ENCODE measurements at regions of chr15 and their contacts with region 1.

Region 1: DNA sequence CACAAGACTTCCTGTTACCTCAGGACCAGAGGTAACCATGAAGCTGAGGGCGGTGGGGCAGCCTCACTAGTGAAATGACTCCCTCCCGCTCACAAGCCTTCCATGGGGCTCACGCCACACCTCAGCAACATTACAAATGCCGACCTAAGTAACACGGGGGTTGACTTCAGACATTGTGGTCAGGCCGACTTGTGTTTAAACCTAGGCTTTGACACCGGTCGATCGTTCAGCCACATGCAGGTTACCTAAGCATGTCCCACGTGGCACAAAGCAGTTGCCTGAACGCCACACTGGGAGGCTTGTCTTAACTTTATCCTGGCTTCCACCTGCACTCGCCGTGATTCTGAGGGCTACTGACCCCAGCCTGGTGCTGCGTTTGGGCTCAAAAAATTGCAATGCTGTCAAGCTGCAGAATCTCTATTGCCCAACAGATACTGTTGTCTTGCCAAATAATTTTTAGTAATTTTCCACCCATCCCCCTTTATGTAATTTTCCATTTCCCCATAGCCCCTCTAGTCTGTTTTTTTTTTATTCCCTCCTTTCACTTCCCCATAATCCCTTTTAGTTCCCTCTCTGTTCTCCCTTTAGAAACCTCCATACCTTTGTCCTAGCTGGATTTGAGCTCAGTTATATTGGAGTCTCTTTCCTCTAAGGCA is 158.6 kb upstream of the RGMA start:
- DNase-seq: no peak

Region 2: DNA sequence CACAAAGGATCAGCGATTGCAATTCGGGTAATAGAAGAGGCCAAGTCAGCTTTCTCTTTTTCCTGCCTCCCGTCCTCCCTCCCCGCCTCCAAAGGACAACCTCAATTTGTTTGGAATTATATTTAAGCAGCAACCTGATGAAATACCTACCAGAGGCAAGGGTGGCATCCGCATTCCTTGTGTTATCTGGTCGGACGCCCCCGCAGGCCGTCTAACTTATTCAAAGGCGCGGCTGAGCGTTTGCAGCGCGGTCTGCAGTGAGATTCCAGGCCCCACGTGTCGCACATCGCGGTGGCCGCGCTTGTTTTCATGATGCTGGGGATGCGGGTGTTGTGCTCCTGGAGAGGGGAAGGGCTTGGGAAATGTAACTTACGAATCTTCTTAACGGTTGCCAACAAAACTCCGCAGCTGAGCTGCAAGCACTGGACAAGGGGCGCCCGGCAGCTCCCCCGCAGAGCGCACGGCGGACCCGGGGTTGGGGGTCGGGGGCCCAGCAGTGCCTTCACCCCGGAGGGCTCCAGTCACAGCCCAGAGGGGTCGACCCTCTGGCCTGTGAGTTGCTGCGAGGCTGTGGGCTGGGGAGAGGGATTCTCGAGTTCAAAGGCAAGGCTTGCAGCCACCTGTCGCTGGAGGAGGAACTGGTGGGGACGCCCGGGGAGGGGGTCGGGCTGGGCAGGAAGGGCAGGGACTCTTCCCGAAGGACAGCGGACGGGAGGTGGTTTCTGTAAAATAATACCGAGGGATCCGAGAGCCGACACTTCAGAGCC is 138.1 kb before region 1 on chr15:
- intact Hi-C with region 1: loop called (anchors 10 kb)
- DNase-seq: no peak

Region 3: GRCh38 chr15:93189561-93189960 is 58.0 kb before region 1 on chr15:
- intact Hi-C with region 1: no loop called
- DNase-seq: no peak

Region 4: GRCh38 chr15:93321881-93322289 is 74.3 kb after region 1 on chr15:
- intact Hi-C with region 1: no loop called
- DNase-seq: no peak

Region 5: DNA sequence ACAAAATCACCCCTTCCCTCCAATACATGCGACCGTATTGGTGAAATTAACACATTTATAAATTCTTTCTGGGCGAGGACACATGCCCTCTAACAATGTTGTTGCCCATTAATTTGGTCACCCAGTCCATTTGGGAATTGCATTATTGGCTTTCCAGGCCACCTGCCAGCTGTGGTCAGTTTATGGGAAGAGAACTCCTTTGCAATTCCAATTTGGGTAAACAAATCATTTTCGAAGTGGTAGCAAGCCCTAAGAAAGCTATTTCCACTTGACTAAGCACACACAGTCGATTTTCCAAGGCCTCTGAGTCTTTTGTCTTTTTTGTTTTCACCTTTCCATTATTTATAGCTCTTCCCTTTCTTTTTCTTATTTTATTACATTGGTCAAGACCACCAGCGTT is 203.7 kb after region 1 on chr15:
- intact Hi-C with region 1: no loop called
- DNase-seq: no peak